AG04449 (cell line): ENCODE measurements at regions of chr2 and their contacts with region 1.

Region 1: DNA sequence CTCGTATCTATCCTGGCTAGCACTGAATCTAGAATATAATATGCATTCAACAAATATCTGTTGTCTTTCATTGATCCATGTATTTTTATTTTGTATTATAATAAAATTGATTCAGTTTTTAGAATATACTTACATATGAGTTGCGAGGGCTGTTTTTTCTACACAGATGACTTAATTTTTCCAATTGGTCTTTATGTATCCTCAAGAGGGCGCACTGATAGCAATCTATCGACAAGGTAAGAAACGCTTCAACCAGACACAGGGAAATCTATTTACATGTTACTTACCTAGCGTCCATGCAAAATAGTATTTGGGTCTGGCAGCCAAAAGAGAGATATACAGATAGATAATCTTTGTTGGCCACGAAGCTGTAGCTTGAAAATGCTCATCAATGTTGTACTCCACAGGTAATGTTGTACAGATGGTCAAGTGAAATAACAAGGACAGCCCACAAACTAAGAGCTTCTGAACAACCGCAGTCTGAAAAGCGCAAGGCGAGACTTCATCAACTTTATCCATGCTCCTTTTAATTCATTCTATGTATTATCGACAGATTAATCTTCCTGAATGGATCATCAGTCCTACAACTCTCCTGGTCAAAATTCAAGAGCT is 35.5 kb upstream of the KIDINS220 start:
- DNase-seq: peak; percentile 23
- H3K4me3 ChIP-seq: no peak overlapping the region
- CTCF ChIP-seq: peak; percentile 39

Region 2: DNA sequence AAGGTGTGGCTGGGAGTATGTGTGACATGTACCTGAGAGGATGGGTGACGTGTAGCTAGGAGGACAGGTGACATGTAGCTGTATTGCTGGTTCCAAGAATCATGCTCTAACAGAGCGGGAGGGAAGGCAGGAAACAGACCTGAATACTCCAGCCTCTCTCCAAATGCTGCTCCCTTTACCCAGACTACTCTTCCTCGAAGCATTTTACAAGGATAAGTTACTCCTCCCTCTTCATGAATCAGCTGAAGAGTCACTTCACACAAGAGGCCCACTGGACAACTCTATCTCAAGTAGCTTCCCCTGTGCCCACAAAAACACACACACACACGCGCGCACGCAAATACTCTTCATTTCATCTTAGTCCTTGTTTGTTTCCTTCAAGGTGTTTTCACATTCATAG is 17.1 kb after region 1 on chr2:
- CTCF ChIA-PET with region 1: interaction called, 11 read pairs
- POLR2A ChIA-PET with region 1: no interaction called
- DNase-seq: no peak
- H3K4me3 ChIP-seq: no peak overlapping the region
- CTCF ChIP-seq: no peak

Region 3: DNA sequence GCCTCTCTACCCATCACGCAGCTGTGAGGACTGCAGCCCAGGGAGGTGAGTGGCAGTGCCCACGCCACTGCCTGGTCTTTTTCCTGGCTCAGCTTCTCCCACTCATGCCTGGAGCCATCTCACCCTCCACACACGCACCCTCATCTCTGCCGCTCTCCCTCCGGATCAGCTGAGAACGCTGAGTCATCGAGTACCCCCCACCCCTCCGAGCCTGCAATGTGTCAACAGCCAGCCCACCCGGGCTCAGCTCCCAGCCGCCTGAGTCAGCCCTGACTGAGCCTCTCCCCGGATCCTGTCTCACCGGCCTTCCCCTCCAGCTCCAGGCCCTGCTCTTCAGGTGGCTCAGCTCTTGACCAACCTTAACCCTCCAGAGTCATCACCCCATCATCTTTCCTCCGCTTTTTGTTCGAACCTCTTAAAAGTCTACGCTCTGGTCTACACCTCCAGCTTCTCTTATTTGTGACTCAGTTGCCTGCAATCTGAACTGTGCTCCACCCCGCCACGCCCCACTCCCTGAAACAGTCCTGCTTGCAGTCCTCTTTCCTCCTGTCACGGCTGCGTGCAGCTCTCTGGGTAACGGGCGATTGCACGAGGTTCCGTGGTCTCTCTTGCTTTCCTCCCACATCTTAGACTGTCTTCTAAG is 239.3 kb after region 1 on chr2:
- CTCF ChIA-PET with region 1: interaction called, 15 read pairs
- POLR2A ChIA-PET with region 1: no interaction called
- DNase-seq: peak; percentile 67
- H3K4me3 ChIP-seq: no peak overlapping the region
- CTCF ChIP-seq: no peak